MCF 10A (cell line): ENCODE measurements at regions of chr9 and their contacts with region 1.

Region 1: DNA sequence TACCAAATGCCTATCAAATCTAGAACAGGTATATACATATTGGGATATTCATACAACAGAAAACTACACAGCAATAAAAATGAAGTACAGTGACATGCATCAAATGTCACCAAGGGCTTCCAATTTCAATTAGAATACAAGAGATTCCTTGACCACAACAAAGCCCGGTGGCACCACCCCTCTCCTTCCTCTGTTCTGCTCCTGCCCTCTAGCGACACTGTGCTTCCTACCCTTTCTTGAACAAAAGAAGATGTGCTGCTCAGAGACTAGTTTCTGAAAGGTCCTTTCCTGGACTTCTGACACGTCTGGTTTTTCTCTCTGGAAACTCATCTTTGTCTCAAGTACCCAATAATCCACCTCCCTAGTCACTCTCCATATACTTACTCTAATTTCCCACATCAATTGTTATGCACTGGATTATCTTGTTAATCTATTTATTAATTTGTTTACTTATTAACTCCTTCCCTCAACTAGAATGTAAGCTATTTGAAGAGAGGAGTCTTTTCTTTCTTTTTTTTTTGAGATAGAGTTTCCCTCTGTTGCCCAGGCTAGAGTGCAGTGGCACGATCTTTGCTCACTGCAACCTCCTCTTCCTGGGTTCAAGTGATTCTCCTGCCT is 70.4 kb upstream of the CTSV start:
- DNase-seq: peak; percentile 74
- H3K4me3 Mint-ChIP-seq: no peak overlapping the region
- H3K27ac Mint-ChIP-seq: no peak overlapping the region
- H3K4me1 Mint-ChIP-seq: peaks cover 12% of the 10 kb centered on the region
- H3K27me3 Mint-ChIP-seq: no peaks in the 10 kb centered on the region
- CTCF ChIP-seq: peak; percentile 74

Region 2: DNA sequence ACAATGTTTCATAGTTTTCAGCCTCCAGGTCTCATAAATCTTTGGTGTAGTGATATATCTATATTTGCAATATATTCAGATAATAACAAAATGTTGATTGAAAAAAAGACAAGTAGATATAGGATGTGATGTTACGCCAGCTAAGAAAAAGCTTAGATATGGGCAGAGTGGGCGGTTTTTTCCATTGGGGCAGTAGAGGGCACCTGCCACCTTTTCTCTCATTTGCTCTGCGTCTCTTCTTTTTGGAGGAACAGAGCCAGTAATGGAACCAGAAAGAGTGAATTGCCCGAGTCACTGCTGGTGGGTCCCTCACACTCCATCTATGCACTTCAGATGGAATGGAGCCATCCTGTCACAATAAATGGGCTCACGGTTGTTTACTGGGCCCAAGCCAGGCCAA is 1729.7 kb before region 1 on chr9:
- CTCF ChIA-PET with region 1: no interaction called
- POLR2A ChIA-PET with region 1: no interaction called
- intact Hi-C with region 1: no loop called
- DNase-seq: no peak
- H3K4me3 Mint-ChIP-seq: no peak overlapping the region
- H3K27ac Mint-ChIP-seq: no peak overlapping the region
- H3K4me1 Mint-ChIP-seq: peaks cover 18% of the 10 kb centered on the region
- H3K27me3 Mint-ChIP-seq: no peaks in the 10 kb centered on the region
- CTCF ChIP-seq: no peak

Region 3: DNA sequence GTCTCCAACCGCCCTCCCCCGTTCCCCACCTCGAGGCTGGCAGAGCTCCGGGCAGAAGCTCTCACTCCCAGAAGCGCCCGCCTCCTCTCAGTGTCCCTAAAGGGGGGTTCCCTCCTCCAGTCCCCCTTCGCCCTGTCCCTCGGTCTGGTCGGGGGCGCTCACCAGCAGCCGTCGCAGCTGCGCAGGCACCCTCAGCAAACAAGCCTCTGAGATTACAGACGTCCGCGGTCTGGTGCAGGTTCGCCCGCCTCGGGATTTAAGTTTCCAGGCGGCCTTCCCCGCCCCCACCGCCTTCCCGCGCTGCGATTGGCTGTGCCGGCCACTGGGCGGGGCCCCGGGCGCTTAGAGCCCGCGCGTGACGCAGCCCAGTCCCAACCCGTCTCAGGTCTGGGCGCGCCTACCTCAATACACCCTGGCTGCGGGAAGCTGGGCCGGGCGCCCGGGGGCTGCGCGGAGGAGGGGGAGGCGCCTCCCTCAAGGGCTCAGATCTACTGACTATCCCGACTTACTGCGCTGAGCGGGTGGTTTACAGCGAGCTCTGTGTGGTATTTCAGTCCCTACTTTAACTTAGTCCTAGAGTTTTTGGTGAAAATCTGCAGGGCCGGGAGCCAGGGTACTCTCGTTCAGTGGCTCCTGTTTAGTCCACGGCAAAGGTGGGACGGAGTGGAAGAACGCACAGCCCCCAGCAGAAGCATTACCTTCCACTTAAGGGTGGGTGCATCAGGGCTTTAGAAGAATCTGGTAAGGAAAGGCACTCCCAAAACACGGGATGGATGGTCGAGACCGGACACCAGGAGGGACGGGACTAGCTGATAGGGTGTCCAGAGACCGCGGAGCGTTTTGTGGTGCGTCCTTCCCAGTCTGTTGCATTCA is 70.2 kb before region 1 on chr9 and contains the start of gene CTSV:
- CTCF ChIA-PET with region 1: interaction called, 3 read pairs
- POLR2A ChIA-PET with region 1: interaction called, 3 read pairs
- intact Hi-C with region 1: loop called (anchors 10 kb)
- DNase-seq: peak; percentile 87
- H3K4me3 Mint-ChIP-seq: peak within 1 kb of the TSS; percentile 86
- H3K27ac Mint-ChIP-seq: peak within 1 kb of the TSS; percentile 49
- H3K4me1 Mint-ChIP-seq: no peaks in the 10 kb centered on the region
- H3K27me3 Mint-ChIP-seq: no peaks in the 10 kb centered on the region
- CTCF ChIP-seq: no peak
- total RNA-seq, gene CTSV: 1.9 and 2.8 TPM in 2 replicates

Region 4: DNA sequence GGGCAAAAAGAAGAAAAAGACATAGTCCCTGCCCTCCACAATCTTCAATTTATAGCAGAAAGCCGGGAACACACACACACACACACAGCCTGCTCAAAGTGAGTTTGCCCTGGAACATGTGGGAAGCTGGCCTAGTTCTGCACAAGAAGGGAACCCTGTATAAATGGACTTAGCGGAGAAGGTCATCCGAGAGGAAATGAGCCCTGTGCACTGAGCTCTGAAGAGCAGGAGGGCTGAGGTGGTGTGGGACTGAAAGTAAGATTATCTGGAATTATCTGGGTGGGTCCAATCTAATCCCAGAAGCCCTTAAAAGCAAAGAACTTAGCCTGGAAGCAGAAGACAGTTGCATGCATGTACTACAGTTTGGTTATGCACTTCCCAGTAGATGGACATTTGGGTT is 19.6 kb after region 1 on chr9:
- CTCF ChIA-PET with region 1: no interaction called
- POLR2A ChIA-PET with region 1: no interaction called
- intact Hi-C with region 1: no loop called
- DNase-seq: no peak
- H3K4me3 Mint-ChIP-seq: no peak overlapping the region
- H3K27ac Mint-ChIP-seq: no peak overlapping the region
- H3K4me1 Mint-ChIP-seq: no peaks in the 10 kb centered on the region
- H3K27me3 Mint-ChIP-seq: no peaks in the 10 kb centered on the region
- CTCF ChIP-seq: no peak